Activated T-helper 2 cell treated with anti-CD3 and anti-CD28 coated beads, Interferon-gamma antibody, Interleukin-2, Interleukin-4, amounts not matched to agents 10 μg/mL and 5 μg/mL and 100 μg/mL, durations not matched to agents 14 hours and 24 hours and 36 hours (primary cell): ENCODE measurements at regions of chr15 and their contacts with region 1.

Region 1: DNA sequence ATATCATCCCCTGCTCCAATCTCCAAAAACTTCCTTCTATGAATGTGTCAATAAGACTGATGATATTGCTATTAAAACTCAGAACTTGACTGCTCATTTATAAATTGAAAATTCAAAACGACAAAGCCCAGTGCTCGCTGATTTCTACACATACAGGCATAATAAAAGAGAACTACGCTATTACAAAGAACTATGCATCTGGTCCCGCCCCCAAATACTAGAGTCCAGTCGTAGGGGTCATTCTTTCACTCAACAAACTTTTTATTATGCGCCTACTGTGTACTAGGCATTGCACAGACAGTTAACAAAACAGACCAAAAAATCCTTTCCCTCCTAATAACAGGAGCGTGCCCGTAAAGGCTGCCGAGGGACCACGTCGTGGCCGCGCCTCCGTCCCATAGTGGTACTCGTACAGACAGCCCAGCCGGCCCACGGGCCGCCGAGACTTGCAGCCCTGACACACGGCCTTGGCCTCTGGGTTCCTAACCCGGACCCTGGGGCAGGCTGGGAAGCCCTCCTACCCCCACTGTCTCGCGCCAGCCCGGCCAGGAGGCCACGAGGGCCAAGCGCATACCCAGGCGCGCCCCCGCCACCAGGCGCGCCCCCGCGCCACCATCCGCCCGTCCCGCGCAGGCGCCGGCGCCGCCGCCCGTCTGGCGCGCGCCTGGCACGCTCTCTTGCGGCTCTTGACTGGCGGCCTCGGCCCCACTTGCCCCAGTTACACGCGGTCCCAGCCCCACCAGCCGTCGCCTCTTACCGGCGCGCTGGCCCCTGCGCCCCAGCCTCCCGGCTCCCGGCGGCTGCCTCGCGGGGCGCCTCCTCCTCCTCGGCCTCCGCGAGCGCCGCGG is 757 bp downstream of the AVEN start:
- DNase-seq: peak; percentile 60
- H3K4me3 Mint-ChIP-seq: peak overlapping the region; percentile 94
- H3K27ac Mint-ChIP-seq: peak overlapping the region; percentile 94
- H3K4me1 Mint-ChIP-seq: peaks cover 26% of the 10 kb centered on the region
- H3K27me3 Mint-ChIP-seq: no peaks in the 10 kb centered on the region

Region 2: DNA sequence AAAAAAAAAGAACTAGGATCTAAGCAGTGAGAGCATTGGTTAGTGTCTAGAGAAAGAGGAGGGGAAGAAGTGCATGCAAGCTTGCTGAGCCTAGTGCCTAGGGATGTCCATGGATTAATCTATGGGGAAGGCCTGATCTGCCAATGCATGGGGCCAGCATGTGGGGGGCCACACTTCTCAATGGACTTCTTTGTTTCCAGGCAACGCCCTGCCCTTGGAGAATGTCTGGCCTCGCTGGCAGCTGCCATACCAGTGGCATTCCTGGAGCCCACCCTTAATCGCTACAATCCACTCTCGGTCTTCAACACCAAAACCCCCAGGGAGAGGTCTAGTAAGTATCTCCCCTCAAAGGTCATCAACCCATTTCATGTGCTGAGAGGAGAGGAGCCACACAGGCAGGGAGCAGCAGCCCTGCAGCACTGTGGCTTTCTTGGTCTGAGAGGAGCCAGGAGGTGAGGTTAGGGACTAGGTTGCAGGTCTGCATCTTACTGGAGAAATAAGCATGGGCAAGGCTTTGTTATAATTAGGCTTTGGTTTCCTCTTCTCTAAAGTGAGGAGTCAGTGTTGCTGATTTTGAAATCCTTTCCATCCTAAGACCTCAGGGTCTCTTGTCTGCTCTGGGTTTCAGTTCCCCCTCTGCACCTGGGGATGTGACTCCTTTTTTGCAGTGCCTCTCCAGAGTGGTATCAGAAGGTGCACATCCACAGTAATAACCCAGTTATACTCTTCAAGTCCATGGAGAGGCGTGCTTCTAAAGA is 258.1 kb before region 1 on chr15:
- intact Hi-C with region 1: no loop called
- DNase-seq: no peak
- H3K4me3 Mint-ChIP-seq: no peak overlapping the region
- H3K27ac Mint-ChIP-seq: no peak overlapping the region
- H3K4me1 Mint-ChIP-seq: no peaks in the 10 kb centered on the region
- H3K27me3 Mint-ChIP-seq: peaks cover 6% of the 10 kb centered on the region

Region 3: GRCh38 chr15:34018021-34018645 is 20.1 kb before region 1 on chr15:
- intact Hi-C with region 1: loop called (anchors 1 kb)
- DNase-seq: peak; percentile 43
- H3K4me3 Mint-ChIP-seq: peak overlapping the region; percentile 67
- H3K27ac Mint-ChIP-seq: peak overlapping the region; percentile 5
- H3K4me1 Mint-ChIP-seq: peaks cover 14% of the 10 kb centered on the region
- H3K27me3 Mint-ChIP-seq: peaks cover 3% of the 10 kb centered on the region

Region 4: GRCh38 chr15:34209421-34210282 is 171.4 kb after region 1 on chr15 and contains the start of gene KATNBL1:
- intact Hi-C with region 1: loop called (anchors 1 kb)
- DNase-seq: peak; percentile 89
- H3K4me3 Mint-ChIP-seq: peak within 1 kb of the TSS; percentile 87
- H3K27ac Mint-ChIP-seq: peak within 1 kb of the TSS; percentile 78
- H3K4me1 Mint-ChIP-seq: peaks cover 20% of the 10 kb centered on the region
- H3K27me3 Mint-ChIP-seq: no peaks in the 10 kb centered on the region
- total RNA-seq, gene KATNBL1: 42.0 and 42.3 TPM in 2 replicates

Region 5: DNA sequence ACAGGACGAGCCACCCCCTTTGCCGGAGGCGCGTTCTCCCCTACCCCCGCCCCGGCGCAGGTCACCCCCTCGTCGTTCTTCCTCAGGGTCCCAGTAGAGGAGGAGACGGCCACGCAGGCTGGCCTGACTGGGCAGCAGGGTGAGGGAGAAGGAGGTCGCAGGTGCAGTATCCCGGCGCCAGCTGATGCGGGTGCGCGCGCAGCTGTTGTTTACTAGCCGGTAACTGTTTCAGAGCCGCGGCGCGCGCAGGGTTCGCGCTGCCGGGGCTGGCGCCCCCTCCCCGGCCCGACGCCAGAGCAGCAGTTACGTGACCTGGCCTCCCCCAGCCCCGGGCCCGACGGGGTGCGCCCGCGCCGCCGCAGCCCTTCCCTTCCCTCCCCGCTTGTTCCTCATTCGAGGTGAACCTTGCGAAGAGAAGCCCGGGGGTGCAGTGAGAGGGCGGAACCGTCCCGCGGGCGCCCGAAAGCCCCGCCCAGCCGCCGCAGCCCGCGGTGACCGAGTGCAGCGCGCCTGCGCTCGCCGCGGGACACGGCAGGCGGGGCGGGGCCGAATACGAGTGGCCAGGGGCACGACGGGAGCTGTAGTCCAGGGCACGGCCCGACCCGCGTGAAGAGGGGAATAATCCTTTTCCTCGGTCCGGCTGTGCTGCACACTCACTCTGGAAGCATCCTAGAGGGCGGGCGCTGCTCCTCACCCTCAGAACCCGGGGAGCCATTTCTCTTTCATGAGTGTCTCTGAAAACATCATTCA is 299.5 kb after region 1 on chr15 and contains the start of gene SLC12A6:
- intact Hi-C with region 1: loop called (anchors 2 kb)
- DNase-seq: peak; percentile 88
- H3K4me3 Mint-ChIP-seq: peak within 1 kb of the TSS; percentile 98
- H3K27ac Mint-ChIP-seq: peak within 1 kb of the TSS; percentile 95
- H3K4me1 Mint-ChIP-seq: peaks cover 56% of the 10 kb centered on the region
- H3K27me3 Mint-ChIP-seq: no peaks in the 10 kb centered on the region
- total RNA-seq, gene SLC12A6: 16.6 and 17.0 TPM in 2 replicates

Region 6: GRCh38 chr15:34587717-34588674 is 549.7 kb after region 1 on chr15:
- intact Hi-C with region 1: loop called (anchors 10 kb)
- DNase-seq: peak; percentile 55
- H3K4me3 Mint-ChIP-seq: peak overlapping the region; percentile 78
- H3K27ac Mint-ChIP-seq: peak overlapping the region; percentile 7
- H3K4me1 Mint-ChIP-seq: peaks cover 20% of the 10 kb centered on the region
- H3K27me3 Mint-ChIP-seq: peaks cover 17% of the 10 kb centered on the region

Region 7: GRCh38 chr15:34993877-34994276 is 955.6 kb after region 1 on chr15:
- intact Hi-C with region 1: loop called (anchors 10 kb)
- DNase-seq: peak; percentile 37
- H3K4me3 Mint-ChIP-seq: peak overlapping the region; percentile 51
- H3K27ac Mint-ChIP-seq: peak overlapping the region; percentile 88
- H3K4me1 Mint-ChIP-seq: peaks cover 39% of the 10 kb centered on the region
- H3K27me3 Mint-ChIP-seq: peaks cover 7% of the 10 kb centered on the region